PC-9 (cell line): ENCODE measurements at regions of chr14 and their contacts with region 1.

Region 1: DNA sequence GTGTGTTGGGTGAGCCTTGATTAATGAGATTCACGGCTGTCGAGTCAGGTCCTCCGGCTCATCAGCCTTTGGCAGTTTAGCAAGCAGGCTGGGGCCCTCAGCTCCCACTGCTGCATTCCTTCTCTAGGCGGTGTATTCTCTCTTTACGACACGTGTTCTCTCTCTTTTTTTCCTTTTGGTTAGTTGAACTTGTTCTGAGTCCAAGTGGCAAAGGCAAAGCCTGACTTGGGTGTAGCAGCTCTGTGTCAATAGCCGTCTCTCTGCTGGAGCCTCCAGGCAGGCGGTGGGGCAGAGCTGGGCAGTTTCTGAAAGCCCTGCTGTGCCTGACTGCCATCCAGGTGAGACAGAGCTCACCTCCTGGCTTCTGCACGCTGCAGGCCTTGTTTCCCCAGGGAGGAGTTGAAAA is 46.6 kb downstream of the SUSD6 start:
- DNase-seq: peak; percentile 84 to 98
- H3K4me3 ChIP-seq: peak overlapping the region; percentile 22; the same call in 1 of the 2 replicates
- H3K27ac ChIP-seq: peak overlapping the region; percentile 90
- H3K4me1 ChIP-seq: peaks cover 89% of the 10 kb centered on the region
- H3K27me3 ChIP-seq: no peaks in the 10 kb centered on the region
- CTCF ChIP-seq: no peak

Region 2: GRCh38 chr14:68598621-68599447 is 1059.1 kb before region 1 on chr14:
- CTCF ChIA-PET with region 1: no interaction called
- POLR2A ChIA-PET with region 1: no interaction called
- intact Hi-C with region 1: no loop called
- DNase-seq: peak; percentile 51 to 96
- H3K4me3 ChIP-seq: peak overlapping the region; percentile 45; the same call in 1 of the 2 replicates
- H3K27ac ChIP-seq: peak overlapping the region; percentile 94
- H3K4me1 ChIP-seq: peaks cover 46% of the 10 kb centered on the region
- H3K27me3 ChIP-seq: no peaks in the 10 kb centered on the region
- CTCF ChIP-seq: no peak

Region 3: GRCh38 chr14:69501423-69501838 is 156.5 kb before region 1 on chr14:
- CTCF ChIA-PET with region 1: no interaction called
- POLR2A ChIA-PET with region 1: no interaction called
- intact Hi-C with region 1: no loop called
- DNase-seq: no peak
- H3K4me3 ChIP-seq: no peak overlapping the region
- H3K27ac ChIP-seq: no peak overlapping the region
- H3K4me1 ChIP-seq: peaks cover 12% of the 10 kb centered on the region
- H3K27me3 ChIP-seq: no peaks in the 10 kb centered on the region
- CTCF ChIP-seq: no peak

Region 4: DNA sequence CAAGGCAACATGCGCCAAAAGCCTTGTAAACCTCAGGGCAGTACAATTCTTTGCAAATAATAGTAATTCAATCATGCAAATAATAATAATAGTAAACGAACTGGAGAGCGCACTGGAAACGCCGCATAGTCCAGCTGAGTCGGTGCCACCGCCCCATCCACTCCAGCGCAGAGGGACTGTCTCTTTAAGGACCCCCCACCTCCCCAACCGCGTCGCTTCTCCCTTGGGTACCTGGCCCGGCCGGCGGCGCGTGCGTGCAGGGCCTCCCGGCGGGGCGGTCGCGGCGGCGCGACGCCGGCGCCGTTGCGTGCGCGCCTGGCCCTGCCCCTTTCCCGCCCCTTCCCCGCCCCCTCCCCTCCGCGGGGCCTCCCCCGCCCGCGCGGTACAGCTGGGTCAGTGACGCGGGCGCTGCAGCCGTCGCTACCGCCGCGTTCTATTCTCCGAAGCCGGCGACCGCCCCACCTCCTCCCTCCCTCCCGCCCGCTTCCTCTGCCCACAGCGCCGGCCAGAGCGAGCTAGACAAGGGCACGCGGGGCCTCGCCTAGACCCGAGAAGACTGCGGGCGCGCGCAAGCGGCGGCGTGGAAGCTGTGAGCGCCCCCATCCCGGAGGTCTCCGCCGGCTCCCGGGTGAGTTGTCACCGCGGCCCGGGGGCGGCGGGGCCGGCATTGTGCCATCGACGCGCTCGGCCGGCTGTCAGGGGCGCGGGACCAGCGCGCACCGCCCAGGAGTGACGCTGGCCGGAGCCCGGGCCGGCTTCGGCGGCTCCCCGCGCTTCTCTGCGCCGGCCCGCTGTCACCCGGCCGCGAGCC is 46.5 kb before region 1 on chr14 and contains the start of gene SUSD6:
- CTCF ChIA-PET with region 1: no interaction called
- POLR2A ChIA-PET with region 1: interaction called, 7 read pairs
- intact Hi-C with region 1: loop called (anchors 1 kb)
- DNase-seq: peak; percentile 65 to 91
- H3K4me3 ChIP-seq: peak within 1 kb of the TSS; percentile 74
- H3K27ac ChIP-seq: no peak within 1 kb of the TSS
- H3K4me1 ChIP-seq: peaks cover 17% of the 10 kb centered on the region
- H3K27me3 ChIP-seq: no peaks in the 10 kb centered on the region
- CTCF ChIP-seq: no peak
- total RNA-seq, gene SUSD6: 24.1 and 43.3 TPM in 2 replicates

Region 5: DNA sequence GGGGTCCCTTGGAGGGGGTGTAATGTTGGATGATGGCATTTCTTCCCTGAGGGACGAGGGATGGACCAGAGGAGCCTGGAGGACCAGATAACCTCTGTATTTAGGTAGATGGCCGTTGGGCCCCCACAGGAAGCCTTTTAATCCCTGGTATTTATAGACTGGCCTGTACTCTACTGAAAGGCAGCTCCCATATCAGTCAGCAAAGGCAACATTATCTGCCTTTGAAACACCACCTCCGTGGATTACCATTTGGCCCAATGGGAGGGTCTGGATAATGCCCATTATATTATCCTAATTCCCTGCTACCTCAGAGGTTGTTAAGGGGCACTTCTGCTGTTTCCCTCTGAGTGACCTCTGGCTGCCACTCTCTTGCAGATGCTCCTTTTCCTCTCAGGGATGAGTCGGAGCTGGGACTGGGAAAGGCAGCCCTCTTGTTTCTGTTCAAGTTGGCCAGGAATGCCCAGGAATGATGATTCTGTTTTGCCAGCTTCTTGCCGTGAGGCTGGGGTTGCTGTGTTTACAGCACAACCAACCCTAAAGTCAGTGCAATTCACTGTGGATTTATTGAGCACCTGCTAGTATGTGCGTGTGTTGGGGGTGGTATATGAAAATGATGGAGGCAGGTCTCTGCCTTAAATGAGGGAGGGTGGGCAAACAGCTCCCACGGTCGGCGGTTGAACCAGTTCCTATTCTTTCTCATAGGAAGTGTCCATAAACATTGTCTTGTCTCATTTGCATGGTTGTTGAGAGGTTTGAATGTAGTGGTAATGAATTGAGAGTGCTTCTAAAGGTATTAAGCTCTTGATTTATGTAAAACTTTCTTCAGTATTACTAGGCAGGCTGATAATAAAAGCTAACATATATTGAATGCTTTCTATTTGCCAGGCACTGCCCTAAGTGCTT is 28.5 kb before region 1 on chr14:
- CTCF ChIA-PET with region 1: no interaction called
- POLR2A ChIA-PET with region 1: interaction called, 3 read pairs
- intact Hi-C with region 1: loop called (anchors 2 kb)
- DNase-seq: no peak
- H3K4me3 ChIP-seq: no peak overlapping the region
- H3K27ac ChIP-seq: no peak overlapping the region
- H3K4me1 ChIP-seq: peaks cover 28% of the 10 kb centered on the region
- H3K27me3 ChIP-seq: no peaks in the 10 kb centered on the region
- CTCF ChIP-seq: no peak

Region 6: GRCh38 chr14:69643443-69644164 is 14.3 kb before region 1 on chr14:
- CTCF ChIA-PET with region 1: no interaction called
- POLR2A ChIA-PET with region 1: no interaction called
- intact Hi-C with region 1: loop called (anchors 1 kb)
- DNase-seq: peak; percentile 88 to 98
- H3K4me3 ChIP-seq: no peak overlapping the region
- H3K27ac ChIP-seq: peak overlapping the region; percentile 77
- H3K4me1 ChIP-seq: peaks cover 43% of the 10 kb centered on the region
- H3K27me3 ChIP-seq: no peaks in the 10 kb centered on the region
- CTCF ChIP-seq: no peak

Region 7: GRCh38 chr14:69695322-69696203 is 37.6 kb after region 1 on chr14:
- CTCF ChIA-PET with region 1: no interaction called
- POLR2A ChIA-PET with region 1: interaction called, 12 read pairs
- intact Hi-C with region 1: loop called (anchors 2 kb)
- DNase-seq: peak in 1 of 2 experiments; percentile 29
- H3K4me3 ChIP-seq: no peak overlapping the region
- H3K27ac ChIP-seq: no peak overlapping the region
- H3K4me1 ChIP-seq: peaks cover 8% of the 10 kb centered on the region
- H3K27me3 ChIP-seq: no peaks in the 10 kb centered on the region
- CTCF ChIP-seq: no peak

Region 8: DNA sequence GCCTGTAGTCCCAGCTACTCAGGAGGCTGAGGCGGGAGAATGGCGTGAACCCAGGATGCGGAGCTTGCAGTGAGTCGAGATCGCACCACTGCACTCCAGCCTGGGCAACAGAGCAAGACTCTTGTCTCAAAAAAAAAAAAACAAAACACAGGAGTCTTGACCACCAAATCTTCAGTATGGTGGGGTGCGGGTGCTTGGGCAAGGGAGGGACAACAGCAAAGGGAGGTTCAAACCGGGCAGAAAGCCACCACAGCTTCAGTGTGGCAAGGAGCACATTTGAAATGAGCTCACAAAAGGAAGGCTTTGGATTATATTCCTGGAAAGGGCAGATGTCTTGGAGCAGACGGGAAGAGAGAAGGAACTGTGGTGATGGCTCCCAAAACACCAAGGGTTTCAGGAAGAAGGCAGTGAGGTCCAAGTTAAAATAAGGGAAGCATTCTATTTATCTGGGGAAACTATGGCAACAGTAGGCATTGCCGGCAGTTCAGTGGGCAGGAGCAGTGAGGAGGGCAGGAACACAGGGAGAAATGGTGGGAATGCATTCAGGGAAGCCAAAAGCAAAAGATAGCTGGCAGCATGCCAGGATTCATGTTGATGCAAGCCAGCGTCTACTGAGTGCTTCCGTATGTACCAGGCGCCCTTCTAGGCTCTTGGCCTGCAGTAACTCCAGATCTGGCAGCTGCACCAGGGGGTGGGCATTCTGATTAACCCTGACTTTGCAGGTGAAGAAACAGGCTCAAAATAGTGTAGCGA is 57.9 kb after region 1 on chr14:
- CTCF ChIA-PET with region 1: interaction called, 3 read pairs
- POLR2A ChIA-PET with region 1: no interaction called
- intact Hi-C with region 1: loop called (anchors 2 kb)
- DNase-seq: peak in 1 of 2 experiments; percentile 49
- H3K4me3 ChIP-seq: no peak overlapping the region
- H3K27ac ChIP-seq: no peak overlapping the region
- H3K4me1 ChIP-seq: no peaks in the 10 kb centered on the region
- H3K27me3 ChIP-seq: no peaks in the 10 kb centered on the region
- CTCF ChIP-seq: no peak